ENCODE measurements at regions of chr1 and their contacts with region 1.

Region 1: GRCh38 chr1:180353945-180354344 is 123.9 kb downstream of the LHX4 start:
- DNase-seq: no peak
- ATAC-seq: peak; percentile 85
- H3K4me3 Mint-ChIP-seq: no peak overlapping the region
- H3K27ac Mint-ChIP-seq: peak overlapping the region; percentile 60
- H3K4me1 Mint-ChIP-seq: peaks cover 20% of the 10 kb centered on the region
- H3K27me3 Mint-ChIP-seq: no peaks in the 10 kb centered on the region
- CTCF ChIP-seq: no peak

Region 2: GRCh38 chr1:180365039-180365438 is 11.1 kb after region 1 on chr1:
- CTCF ChIA-PET with region 1: interaction called, 16 read pairs
- POLR2A ChIA-PET with region 1: interaction called, 3 read pairs
- DNase-seq: no peak
- ATAC-seq: peak; percentile 82
- H3K4me3 Mint-ChIP-seq: no peak overlapping the region
- H3K27ac Mint-ChIP-seq: no peak overlapping the region
- H3K4me1 Mint-ChIP-seq: peaks cover 31% of the 10 kb centered on the region
- H3K27me3 Mint-ChIP-seq: no peaks in the 10 kb centered on the region
- CTCF ChIP-seq: peak; percentile 18; the same call in 1 of the 2 replicates